ENCODE measurements at regions of chr18 and their contacts with region 1.

Region 1: GRCh38 chr18:40387130-40387787 is 1567.8 kb upstream of the PIK3C3 start:
- DNase-seq: no peak
- ATAC-seq: no peak
- H3K4me3 ChIP-seq: no peak overlapping the region
- H3K27ac ChIP-seq: no peak overlapping the region
- H3K4me1 ChIP-seq: no peaks in the 10 kb centered on the region
- H3K27me3 ChIP-seq: no peaks in the 10 kb centered on the region
- CTCF ChIP-seq: no peak
- EP300 ChIP-seq: no peak
- POLR2A ChIP-seq: no peak
- RAD21 ChIP-seq: no peak

Region 2: GRCh38 chr18:40371673-40372072 is 15.6 kb before region 1 on chr18:
- CTCF ChIA-PET with region 1: no interaction called
- POLR2A ChIA-PET with region 1: no interaction called
- in situ Hi-C with region 1: no loop called
- intact Hi-C with region 1: loop called (anchors 1 kb)
- DNase-seq: no peak
- ATAC-seq: no peak
- H3K4me3 ChIP-seq: no peak overlapping the region
- H3K27ac ChIP-seq: no peak overlapping the region
- H3K4me1 ChIP-seq: no peaks in the 10 kb centered on the region
- H3K27me3 ChIP-seq: no peaks in the 10 kb centered on the region
- CTCF ChIP-seq: no peak
- EP300 ChIP-seq: no peak
- POLR2A ChIP-seq: no peak
- RAD21 ChIP-seq: no peak

Measured in HepG2 (cell line).